ENCODE measurements at regions of chr15 and their contacts with region 1.

Region 1: DNA sequence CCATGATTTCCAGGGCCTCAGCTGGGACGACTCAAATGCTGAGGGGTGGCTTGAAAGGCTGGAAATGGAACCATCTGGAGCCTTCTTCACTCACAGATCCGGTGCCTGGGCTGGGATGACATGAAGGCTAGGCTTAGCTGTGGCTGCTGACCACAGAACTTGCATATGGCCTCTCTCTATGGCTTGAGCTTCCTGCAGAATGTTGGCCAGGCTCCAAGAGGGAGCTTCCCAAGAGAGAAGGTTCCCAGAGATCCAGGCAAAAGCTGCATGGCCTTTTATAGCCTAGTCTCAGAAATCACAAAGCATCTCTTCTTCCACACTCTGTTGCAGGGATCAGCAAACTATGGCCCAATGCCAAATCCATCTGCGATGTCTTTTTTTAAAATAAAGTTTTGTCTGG is 44.8 kb downstream of the GATM start:
- DNase-seq: no peak

Region 2: GRCh38 chr15:45378149-45378912 is 44.8 kb after region 1 on chr15 and contains the start of gene GATM:
- intact Hi-C with region 1: loop called (anchors 5 kb)
- DNase-seq: peak; percentile 89
- total RNA-seq, gene GATM: 40.0 TPM